Caco-2 (cell line): ENCODE measurements at regions of chr13 and their contacts with region 1.

Region 1: GRCh38 chr13:39263033-39263432 is 224.8 kb downstream of the NHLRC3 start:
- DNase-seq: peak; percentile 42 to 64
- H3K4me3 ChIP-seq: no peak overlapping the region
- H3K4me3 Mint-ChIP-seq: no peak overlapping the region
- H3K27ac Mint-ChIP-seq: no peak overlapping the region
- H3K4me1 ChIP-seq: no peaks in the 10 kb centered on the region
- H3K4me1 Mint-ChIP-seq: no peaks in the 10 kb centered on the region
- H3K27me3 ChIP-seq: no peaks in the 10 kb centered on the region
- H3K27me3 Mint-ChIP-seq: peaks cover 7% of the 10 kb centered on the region
- CTCF ChIP-seq: peak; percentile 68 to 73

Region 2: DNA sequence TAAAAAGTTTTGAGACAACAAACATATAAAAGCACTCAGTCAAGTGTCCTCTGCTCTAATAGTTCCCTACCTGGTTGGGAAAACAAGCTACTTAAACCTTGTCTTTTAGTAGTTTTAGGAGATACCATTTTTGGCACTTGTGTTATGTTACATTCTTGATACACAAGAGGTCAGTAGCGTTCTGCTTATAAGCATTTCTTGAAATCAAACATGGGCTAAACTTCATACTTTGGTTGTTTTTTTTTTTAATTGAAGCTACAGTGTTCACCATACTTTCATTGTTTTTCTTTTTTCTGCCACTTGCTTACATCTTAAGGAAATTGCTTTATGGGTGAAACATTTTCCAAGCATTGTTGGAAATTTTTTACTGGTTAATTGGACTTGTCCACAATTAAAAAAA is 211.9 kb before region 1 on chr13:
- CTCF ChIA-PET with region 1: interaction called, 3 read pairs
- POLR2A ChIA-PET with region 1: no interaction called
- intact Hi-C with region 1: loop called (anchors 1 kb)
- DNase-seq: no peak
- H3K4me3 ChIP-seq: no peak overlapping the region
- H3K4me3 Mint-ChIP-seq: no peak overlapping the region
- H3K27ac Mint-ChIP-seq: no peak overlapping the region
- H3K4me1 ChIP-seq: no peaks in the 10 kb centered on the region
- H3K4me1 Mint-ChIP-seq: no peaks in the 10 kb centered on the region
- H3K27me3 ChIP-seq: no peaks in the 10 kb centered on the region
- H3K27me3 Mint-ChIP-seq: no peaks in the 10 kb centered on the region
- CTCF ChIP-seq: peak; percentile 30 to 42